ENCODE measurements at regions of chr19 and their contacts with region 1.

Region 1: DNA sequence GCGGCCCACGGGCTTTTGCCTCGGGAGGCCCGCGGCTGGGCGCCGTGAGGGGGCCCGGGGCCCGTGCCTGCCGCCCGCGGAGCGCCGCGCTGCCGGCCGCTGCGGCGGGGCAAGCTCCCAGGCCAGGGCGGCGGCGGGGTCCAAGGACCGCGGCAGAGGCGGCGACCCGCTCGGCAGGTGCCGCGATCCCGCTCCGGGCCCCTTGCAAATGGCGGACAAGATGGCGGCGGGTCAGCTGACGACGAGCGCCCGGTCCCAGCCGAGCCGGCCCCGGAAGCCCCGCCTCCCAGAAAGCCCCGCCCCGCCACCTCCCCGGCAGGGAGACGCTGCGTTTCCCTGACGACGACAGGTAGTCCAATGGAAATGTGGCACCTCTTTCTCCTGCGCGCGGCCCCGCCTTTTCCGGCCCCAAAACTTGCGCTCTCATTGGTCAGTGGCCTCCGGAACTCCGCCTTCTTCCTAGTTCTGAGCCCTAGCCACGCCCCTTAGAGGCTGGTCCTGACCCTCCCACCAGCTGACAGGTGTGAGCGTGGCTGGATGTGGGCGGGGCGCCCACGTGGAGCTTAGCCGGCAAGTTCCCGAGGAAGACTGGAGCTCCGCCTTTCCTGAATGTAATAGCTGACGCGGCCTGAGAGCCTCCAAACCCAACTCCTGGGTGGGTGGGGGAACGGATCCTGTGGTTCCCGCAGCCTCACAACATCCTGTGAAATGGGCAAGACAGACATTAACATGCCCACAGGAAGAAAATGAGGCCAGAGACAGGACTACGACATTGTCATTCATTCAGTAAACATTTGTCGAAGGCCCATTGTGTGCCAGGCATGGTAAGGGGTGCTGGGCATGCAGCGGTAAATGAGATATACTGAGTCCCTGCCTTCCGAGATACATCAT is at the start of gene AP3D1:
- DNase-seq: peak; percentile 100
- H3K4me3 ChIP-seq: peak within 1 kb of the TSS; percentile 95
- H3K27ac ChIP-seq: peak within 1 kb of the TSS; percentile 74 to 78
- H3K4me1 ChIP-seq: peaks cover 5% of the 10 kb centered on the region
- H3K27me3 ChIP-seq: no peaks in the 10 kb centered on the region
- CTCF ChIP-seq: no peak
- POLR2A ChIP-seq: peak; percentile 43
- total RNA-seq, gene AP3D1: 115 to 178 TPM

Region 2: DNA sequence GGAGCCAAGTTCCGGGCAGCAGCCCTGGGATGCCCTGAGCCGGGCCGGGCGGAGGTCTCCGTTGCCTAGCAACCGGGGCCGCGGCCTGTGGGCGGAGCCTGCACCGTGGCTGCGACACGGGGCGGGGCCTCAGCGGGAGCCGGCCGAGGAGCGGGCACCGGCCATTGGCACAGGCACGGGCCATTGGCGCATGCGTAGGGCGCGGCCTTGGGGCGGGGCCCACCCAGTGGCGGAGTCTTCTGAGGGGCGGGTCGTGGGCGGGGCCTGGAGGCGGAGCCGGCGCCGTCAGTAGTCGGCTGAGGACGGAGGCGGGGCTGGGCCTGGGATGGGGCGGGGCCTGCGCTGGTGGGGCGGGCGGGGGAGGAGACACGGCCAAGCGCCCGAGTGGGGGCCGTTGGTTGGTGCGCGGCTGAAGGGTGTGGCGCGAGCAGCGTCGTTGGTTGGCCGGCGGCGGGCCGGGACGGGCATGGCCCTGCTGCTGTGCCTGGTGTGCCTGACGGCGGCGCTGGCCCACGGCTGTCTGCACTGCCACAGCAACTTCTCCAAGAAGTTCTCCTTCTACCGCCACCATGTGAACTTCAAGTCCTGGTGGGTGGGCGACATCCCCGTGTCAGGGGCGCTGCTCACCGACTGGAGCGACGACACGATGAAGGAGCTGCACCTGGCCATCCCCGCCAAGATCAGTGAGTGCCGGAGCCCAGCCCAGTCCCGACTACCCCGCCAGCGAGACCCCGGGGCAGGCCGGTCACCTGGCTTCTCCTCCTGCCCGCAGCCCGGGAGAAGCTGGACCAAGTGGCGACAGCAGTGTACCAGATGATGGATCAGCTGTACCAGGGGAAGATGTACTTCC is 54.9 kb before region 1 on chr19 and contains the start of gene IZUMO4:
- intact Hi-C with region 1: loop called (anchors 2 kb)
- DNase-seq: peak; percentile 99
- H3K4me3 ChIP-seq: peak within 1 kb of the TSS; percentile 77 to 81
- H3K27ac ChIP-seq: peak within 1 kb of the TSS; percentile 91 to 96
- H3K4me1 ChIP-seq: peaks cover 20% of the 10 kb centered on the region
- H3K27me3 ChIP-seq: no peaks in the 10 kb centered on the region
- CTCF ChIP-seq: peak in 3 of 4 experiments; percentile 34 to 63 (median 62)
- POLR2A ChIP-seq: peak; percentile 59
- total RNA-seq, gene IZUMO4: 11.8 to 50.2 TPM

Region 3: GRCh38 chr19:2221918-2222317 is 70.3 kb after region 1 on chr19:
- intact Hi-C with region 1: loop called (anchors 5 kb)
- DNase-seq: no peak
- H3K4me3 ChIP-seq: no peak overlapping the region
- H3K27ac ChIP-seq: no peak overlapping the region
- H3K4me1 ChIP-seq: no peaks in the 10 kb centered on the region
- H3K27me3 ChIP-seq: no peaks in the 10 kb centered on the region
- CTCF ChIP-seq: peak in 1 of 4 experiments; percentile 22
- POLR2A ChIP-seq: no peak

Measured in prostate gland (tissue), 2 donors.